Activated T-helper 1 cell treated with anti-CD3 and anti-CD28 coated beads, Interleukin-12 subunit alpha, Interleukin-12 subunit beta, Interleukin-2, Interleukin-4 antibody, amounts not matched to agents 30 ng/mL and 10 ng/mL and 1 ng/mL, durations not matched to agents 14 hours and 24 hours and 36 hours (primary cell): ENCODE measurements at regions of chr11 and their contacts with region 1.

Region 1: DNA sequence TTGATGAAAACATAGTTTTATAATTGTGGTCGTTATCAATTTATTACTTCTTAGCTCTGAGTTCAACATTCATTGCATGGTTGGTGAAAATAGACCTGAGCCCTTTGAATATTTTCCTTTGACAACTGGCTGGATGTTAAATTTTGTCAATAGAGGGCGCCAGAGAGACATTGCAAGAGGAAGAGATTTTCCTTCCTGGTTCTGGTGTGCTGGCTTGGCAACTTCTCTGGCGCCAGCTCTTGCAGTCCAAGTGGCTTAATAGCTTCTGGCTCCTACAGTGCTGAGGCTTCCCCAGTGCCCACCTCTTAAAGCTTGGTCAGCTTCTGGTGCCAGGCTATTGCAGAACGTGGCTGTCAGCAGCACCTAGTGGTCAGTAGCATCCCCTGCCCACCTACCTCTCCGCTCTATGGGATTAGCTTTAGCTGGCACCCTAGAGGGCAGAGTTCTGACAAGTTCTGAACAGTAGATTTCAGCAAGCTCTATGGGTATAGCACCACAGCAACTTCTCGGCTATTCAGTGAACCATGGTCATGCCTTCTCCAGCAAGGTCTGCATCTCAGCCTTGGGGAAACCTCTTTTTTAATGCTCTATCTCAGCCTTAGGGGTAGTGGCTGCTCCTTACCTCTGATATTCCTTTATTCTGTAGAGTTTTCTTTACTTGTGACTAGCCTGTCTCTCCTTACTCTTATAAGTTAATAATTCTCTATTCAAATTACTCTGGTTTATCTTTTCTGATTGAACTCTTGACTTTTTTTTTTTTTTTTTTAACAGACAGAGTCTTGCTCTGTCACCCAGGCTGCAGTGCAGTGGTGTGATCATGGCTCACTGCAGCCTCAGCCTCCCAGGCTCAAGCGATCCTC is 59.4 kb downstream of the ACER3 start:
- DNase-seq: peak; percentile 51
- H3K4me3 Mint-ChIP-seq: no peak overlapping the region
- H3K27ac Mint-ChIP-seq: no peak overlapping the region
- H3K4me1 Mint-ChIP-seq: peaks cover 14% of the 10 kb centered on the region
- H3K27me3 Mint-ChIP-seq: peaks cover 2% of the 10 kb centered on the region

Region 2: DNA sequence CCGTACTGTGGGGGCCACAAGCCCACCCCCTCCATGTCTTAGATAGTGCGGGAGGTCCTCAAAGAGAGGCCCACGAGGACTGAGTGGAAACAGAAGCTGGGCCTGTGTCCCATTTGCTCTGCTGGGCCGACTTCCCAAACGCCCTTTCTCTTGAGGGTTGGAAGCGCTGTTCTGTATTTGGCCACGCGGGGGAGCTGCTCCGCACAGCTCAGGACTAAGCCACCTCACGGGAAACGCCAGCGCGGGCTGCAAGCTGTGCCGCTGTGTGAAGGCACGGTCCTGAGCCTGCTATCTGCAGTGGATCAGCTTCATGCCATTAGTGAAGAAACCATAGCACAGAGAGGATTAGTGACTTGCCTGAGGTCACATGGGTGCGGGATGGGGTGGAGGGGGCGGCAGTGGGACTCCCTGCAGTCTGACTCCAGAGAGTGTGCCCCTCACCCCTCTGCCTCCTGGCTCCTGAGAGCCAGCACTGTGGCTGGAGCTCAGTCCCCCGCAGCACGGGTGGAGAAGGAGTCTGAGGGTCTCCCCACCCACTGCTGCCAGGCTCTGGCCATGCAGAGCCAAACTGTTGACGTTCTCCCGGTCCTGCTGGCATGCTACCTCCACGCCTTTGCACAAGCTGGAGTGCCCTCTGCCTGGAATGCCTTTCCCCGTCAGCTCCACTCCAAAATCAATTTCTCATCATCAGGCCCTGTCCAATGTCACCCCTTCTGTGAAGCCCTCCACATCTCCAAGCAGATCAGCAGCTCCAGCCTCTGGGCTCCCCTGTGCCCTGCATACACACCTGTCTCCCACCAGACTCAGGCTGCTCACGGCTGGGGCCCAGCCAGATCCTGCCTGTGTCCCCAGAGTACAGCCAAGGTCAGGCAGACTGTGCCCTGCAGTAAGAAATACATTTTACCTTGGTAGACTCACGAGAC is 198.1 kb before region 1 on chr11:
- intact Hi-C with region 1: loop called (anchors 1 kb)
- DNase-seq: peak; percentile 56
- H3K4me3 Mint-ChIP-seq: no peak overlapping the region
- H3K27ac Mint-ChIP-seq: no peak overlapping the region
- H3K4me1 Mint-ChIP-seq: no peaks in the 10 kb centered on the region
- H3K27me3 Mint-ChIP-seq: peaks cover 8% of the 10 kb centered on the region

Region 3: DNA sequence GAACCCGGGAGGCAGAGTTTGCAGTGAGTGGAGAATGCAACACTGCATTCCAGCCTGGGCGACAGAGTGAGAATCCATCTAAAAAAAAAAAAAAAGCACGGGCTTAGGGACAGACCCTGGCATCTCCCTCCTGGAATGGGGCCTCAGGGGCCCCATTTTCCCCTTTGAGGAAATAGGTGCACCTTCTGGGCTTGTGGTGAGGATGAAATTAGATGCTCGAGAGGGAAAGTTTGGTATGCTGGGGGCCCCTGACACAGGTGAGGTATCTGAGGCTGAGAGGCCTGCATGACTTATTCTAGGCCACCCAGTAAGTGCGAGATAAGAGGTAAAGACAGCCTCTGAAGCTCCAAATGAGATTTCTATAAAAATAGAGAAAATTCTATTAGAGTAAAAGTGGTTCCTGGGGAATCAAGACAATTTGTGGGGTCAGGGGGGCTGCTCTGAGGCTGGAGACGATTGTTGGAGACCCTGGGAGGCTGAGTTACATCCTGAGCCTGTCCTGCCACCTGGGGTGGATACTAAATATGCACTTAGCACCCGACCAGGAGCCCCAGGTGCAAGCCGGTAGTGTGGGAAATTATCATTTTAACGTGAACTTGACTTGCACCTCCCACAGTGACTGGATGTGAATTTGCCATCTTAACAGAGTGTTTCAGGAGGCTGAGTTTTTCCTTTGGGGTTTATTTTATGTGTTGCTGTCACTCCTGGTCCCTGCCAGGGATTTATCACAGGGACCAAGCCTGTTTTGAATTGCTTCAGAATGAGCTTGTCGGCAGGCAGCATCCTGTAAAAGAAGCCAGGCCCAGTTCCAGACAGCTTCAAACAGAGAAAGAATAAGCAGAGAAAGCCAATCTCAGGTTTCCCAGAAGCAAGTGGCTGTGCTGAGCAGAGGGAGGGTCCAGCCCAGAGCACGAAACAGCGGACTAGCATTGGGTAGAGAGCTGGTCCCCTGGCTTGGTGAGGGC is 185.4 kb before region 1 on chr11:
- intact Hi-C with region 1: loop called (anchors 1 kb)
- DNase-seq: no peak
- H3K4me3 Mint-ChIP-seq: no peak overlapping the region
- H3K27ac Mint-ChIP-seq: no peak overlapping the region
- H3K4me1 Mint-ChIP-seq: no peaks in the 10 kb centered on the region
- H3K27me3 Mint-ChIP-seq: peaks cover 9% of the 10 kb centered on the region

Region 4: DNA sequence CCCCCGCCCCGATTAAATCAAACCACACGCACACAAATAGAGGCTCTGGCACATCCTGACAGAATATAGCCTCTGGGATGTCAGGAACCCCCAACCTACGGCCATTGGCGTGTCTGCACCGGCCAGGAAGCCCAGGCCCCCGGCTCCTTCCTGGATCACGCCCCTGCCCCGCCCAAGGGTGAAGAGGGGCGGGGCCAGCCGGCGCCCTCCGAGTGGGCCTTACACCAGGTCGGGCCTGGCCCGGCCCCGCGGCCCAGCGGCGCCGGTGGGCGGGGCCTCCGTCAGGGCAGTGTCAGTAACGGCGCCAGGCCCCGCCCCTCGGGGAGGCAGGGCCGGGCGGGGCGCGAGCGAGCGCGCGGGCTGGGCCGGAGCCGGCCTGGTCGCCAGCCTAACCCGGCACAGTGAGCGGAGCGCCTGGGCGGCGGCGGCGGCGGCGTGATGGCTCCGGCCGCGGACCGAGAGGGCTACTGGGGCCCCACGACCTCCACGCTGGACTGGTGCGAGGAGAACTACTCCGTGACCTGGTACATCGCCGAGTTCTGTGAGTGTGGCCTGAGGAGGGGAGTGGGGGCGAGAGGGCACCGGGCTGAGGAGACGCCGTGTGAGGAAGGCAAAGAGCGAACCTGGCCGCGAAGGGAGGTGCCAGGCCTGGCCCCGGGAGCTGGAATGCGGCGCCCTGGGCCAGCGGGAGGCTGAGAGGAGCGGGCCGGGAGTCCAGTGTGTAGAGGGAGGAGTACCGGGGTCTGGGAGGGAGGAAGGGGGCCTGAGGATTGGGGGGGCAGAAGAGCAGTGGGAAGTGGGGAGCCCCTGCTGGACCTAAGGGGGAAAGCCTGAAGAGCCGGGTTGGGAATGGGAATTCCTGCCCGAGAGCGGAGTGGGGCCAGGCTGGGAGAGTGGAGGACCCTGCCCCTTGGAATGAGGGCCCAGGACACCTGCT is 59.3 kb before region 1 on chr11 and contains the start of gene ACER3:
- intact Hi-C with region 1: loop called (anchors 1 kb)
- DNase-seq: peak; percentile 87
- H3K4me3 Mint-ChIP-seq: peak within 1 kb of the TSS; percentile 90
- H3K27ac Mint-ChIP-seq: peak within 1 kb of the TSS; percentile 73
- H3K4me1 Mint-ChIP-seq: peaks cover 33% of the 10 kb centered on the region
- H3K27me3 Mint-ChIP-seq: peaks cover 2% of the 10 kb centered on the region
- total RNA-seq, gene ACER3: 9.9 and 12.2 TPM in 2 replicates

Region 5: GRCh38 chr11:77039491-77040400 is 119.6 kb after region 1 on chr11:
- intact Hi-C with region 1: loop called (anchors 1 kb)
- DNase-seq: peak; percentile 4
- H3K4me3 Mint-ChIP-seq: no peak overlapping the region
- H3K27ac Mint-ChIP-seq: no peak overlapping the region
- H3K4me1 Mint-ChIP-seq: no peaks in the 10 kb centered on the region
- H3K27me3 Mint-ChIP-seq: peaks cover 27% of the 10 kb centered on the region

Region 6: GRCh38 chr11:77091146-77091940 is 171.2 kb after region 1 on chr11:
- intact Hi-C with region 1: loop called (anchors 1 kb)
- DNase-seq: peak; percentile 69
- H3K4me3 Mint-ChIP-seq: no peak overlapping the region
- H3K27ac Mint-ChIP-seq: no peak overlapping the region
- H3K4me1 Mint-ChIP-seq: peaks cover 8% of the 10 kb centered on the region
- H3K27me3 Mint-ChIP-seq: peaks cover 3% of the 10 kb centered on the region